ENCODE measurements at regions of chr1 and their contacts with region 1.

Region 1: DNA sequence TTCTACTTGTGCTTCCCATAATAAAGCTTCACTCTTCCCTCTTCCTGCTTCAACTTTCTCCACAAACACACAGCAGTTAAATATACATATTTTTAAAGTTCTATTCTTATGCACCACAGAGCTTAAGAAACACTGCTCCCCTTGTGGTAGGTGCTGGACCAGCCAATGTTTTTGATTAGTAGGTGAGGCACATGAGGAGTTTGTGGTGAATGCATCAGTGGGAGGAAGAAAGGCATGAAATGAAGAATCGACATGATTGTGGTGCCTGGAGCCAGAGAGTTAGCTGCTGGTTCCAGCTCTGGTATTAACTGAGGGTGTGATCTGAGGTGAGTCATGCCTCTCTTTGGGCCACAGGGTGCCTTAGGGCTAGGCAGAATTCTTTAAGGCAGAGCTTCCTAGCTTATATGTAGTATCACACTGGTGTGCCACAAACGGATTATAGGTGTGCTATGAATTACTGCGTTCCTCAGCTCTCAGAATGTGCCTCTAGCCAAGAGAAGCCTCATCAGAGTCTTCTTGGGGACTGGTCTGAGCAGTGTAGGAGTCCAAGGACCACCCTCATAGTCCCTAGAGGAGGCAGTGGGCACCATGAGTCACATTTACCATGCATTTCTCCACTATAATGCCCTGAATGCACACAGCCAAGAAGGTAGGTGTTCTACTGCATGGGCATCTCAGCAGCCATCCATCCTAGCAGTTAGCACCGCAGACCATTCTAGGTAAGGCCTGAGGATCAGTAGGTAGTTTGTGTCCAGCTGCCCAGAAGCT is 97.4 kb upstream of the SGIP1 start:
- DNase-seq: peak; percentile 46
- H3K4me3 ChIP-seq: no peak overlapping the region
- H3K27ac ChIP-seq: no peak overlapping the region
- H3K4me1 ChIP-seq: peaks cover 34% of the 10 kb centered on the region
- H3K27me3 ChIP-seq: no peaks in the 10 kb centered on the region
- CTCF ChIP-seq: peak; percentile 13 to 31
- POLR2A ChIP-seq: no peak

Region 2: GRCh38 chr1:66360285-66360724 is 76.3 kb before region 1 on chr1:
- CTCF ChIA-PET with region 1: interaction called, 10 read pairs
- POLR2A ChIA-PET with region 1: no interaction called
- dilution Hi-C with region 1: no loop called
- intact Hi-C with region 1: no loop called
- DNase-seq: no peak
- H3K4me3 ChIP-seq: no peak overlapping the region
- H3K27ac ChIP-seq: peak overlapping the region; percentile 27
- H3K4me1 ChIP-seq: peaks cover 38% of the 10 kb centered on the region
- H3K27me3 ChIP-seq: no peaks in the 10 kb centered on the region
- CTCF ChIP-seq: no peak
- POLR2A ChIP-seq: no peak

Measured in endothelial cell of umbilical vein (primary cell).